ENCODE measurements at regions of chr11 and their contacts with region 1.

Region 1: DNA sequence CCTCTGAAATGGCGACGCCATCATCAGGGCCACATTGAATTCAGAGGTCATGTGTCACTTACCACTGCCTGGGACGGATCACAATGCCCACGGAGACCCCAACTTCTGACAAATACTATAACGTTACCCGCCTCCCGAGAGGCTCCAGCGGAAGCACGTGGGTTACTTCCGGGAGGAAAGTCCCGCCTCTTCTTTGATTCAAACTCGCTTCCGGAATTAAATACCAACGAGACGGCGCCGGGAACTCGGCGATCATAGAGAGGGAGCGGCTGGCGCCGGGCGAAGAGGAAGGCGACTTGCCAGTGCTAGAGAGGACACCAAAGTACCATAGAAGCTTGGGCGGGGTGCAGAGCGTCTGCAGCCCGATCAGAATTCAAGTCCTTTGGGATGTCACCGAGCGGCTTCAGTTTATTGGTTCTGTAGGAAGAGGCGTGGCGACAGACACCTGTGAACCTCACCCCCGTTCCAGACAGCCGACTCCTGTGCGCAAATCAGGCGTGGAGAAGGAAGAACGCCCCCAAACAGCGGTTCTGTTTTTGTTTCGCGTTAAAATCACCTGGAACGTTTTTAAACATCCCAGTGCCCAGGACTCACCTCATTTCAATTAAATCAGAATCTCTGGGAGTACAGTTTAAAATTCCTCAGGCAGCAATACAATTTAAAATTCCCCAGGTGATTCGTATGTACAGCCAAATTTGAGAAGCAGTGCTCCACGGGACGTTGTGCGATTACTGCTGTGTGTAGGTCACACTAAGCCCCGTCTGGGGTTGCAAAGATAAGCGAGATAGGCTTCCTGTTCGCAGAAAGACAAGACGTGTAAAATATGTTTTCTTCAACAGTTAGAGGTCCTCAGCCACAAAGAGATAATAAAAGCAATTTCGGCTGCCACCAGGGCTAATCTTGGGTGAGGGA is at the start of gene TIMM10:
- DNase-seq: peak; percentile 97 to 99
- H3K4me3 ChIP-seq: peak within 1 kb of the TSS; percentile 78
- H3K4me3 Mint-ChIP-seq: peak within 1 kb of the TSS; percentile 92
- H3K27ac Mint-ChIP-seq: peak within 1 kb of the TSS; percentile 89
- H3K4me1 ChIP-seq: peaks cover 14% of the 10 kb centered on the region
- H3K4me1 Mint-ChIP-seq: peaks cover 22% of the 10 kb centered on the region
- H3K27me3 ChIP-seq: no peaks in the 10 kb centered on the region
- H3K27me3 Mint-ChIP-seq: no peaks in the 10 kb centered on the region
- CTCF ChIP-seq: no peak
- total RNA-seq, gene TIMM10: 102 and 103 TPM in 2 replicates

Region 2: GRCh38 chr11:57456960-57457642 is 73.8 kb before region 1 on chr11:
- CTCF ChIA-PET with region 1: interaction called, 18 read pairs
- POLR2A ChIA-PET with region 1: interaction called, 3 read pairs
- intact Hi-C with region 1: loop called (anchors 1 kb)
- DNase-seq: peak; percentile 88 to 92
- H3K4me3 ChIP-seq: no peak overlapping the region
- H3K4me3 Mint-ChIP-seq: peak overlapping the region; percentile 85
- H3K27ac Mint-ChIP-seq: no peak overlapping the region
- H3K4me1 ChIP-seq: peaks cover 28% of the 10 kb centered on the region
- H3K4me1 Mint-ChIP-seq: peaks cover 20% of the 10 kb centered on the region
- H3K27me3 ChIP-seq: peaks cover 3% of the 10 kb centered on the region; the same call in 1 of the 2 replicates
- H3K27me3 Mint-ChIP-seq: peaks cover 15% of the 10 kb centered on the region
- CTCF ChIP-seq: peak; percentile 98 to 99

Region 3: DNA sequence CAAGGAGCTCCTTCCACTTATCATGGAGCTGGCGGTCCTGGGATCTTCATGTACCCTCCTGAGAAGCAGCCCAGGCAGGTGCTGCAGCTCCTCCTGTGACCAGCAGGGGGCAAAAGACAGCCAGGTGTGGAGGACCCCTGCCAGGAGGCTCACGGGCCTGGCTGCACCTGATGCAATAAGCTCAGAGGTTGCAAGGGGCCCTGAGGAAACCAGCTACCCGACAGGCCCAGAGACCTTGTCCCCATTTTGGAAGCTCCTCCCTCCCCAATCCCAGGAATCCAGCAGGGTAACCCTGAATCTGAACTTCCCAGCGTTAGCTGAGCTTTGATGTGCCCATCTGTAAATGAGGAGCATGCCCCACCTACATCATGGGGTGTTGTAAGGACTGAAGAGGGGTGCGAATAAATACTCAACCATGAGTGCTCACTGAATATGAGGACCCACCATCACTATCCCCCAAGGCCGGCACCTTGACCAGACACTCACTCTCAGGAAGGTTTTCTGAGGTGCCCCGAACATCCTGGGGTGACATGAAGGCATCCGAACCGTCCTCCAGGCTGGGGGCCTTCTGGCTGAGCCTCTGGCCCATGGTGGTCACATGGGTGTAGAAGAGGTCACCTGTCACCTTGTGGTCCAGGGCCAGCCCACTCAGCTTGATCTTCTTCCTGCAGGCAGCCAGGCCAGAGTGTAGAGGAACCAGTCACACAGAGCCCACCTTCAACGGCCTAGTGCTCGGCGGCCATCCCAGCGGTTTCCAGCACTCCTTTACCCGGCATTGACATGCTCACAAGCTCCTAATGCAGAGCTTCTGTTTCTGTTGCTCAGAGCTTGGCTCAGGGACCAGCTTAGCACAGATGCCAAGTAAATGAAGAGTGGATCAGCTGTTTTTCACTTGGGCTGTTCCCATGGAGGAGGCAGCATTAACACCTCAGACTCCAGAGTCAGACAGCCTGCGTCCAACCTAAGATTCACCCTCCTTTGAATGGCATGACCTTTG is 37.0 kb before region 1 on chr11:
- CTCF ChIA-PET with region 1: interaction called, 132 read pairs
- POLR2A ChIA-PET with region 1: interaction called, 13 read pairs
- intact Hi-C with region 1: loop called (anchors 1 kb)
- DNase-seq: peak; percentile 95 to 96
- H3K4me3 ChIP-seq: no peak overlapping the region
- H3K4me3 Mint-ChIP-seq: peak overlapping the region; percentile 25
- H3K27ac Mint-ChIP-seq: peak overlapping the region; percentile 96
- H3K4me1 ChIP-seq: peaks cover 40% of the 10 kb centered on the region
- H3K4me1 Mint-ChIP-seq: peaks cover 28% of the 10 kb centered on the region
- H3K27me3 ChIP-seq: no peaks in the 10 kb centered on the region
- H3K27me3 Mint-ChIP-seq: no peaks in the 10 kb centered on the region
- CTCF ChIP-seq: peak; percentile 95 to 97

Region 4: GRCh38 chr11:57552479-57552878 is 21.6 kb after region 1 on chr11:
- CTCF ChIA-PET with region 1: interaction called, 8 read pairs
- POLR2A ChIA-PET with region 1: interaction called, 4 read pairs
- intact Hi-C with region 1: loop called (anchors 1 kb)
- DNase-seq: peak; percentile 89 to 93
- H3K4me3 ChIP-seq: no peak overlapping the region; the same call in 1 of the 2 replicates
- H3K4me3 Mint-ChIP-seq: peak overlapping the region; percentile 75
- H3K27ac Mint-ChIP-seq: peak overlapping the region; percentile 99
- H3K4me1 ChIP-seq: peaks cover 44% of the 10 kb centered on the region
- H3K4me1 Mint-ChIP-seq: peaks cover 18% of the 10 kb centered on the region
- H3K27me3 ChIP-seq: no peaks in the 10 kb centered on the region
- H3K27me3 Mint-ChIP-seq: no peaks in the 10 kb centered on the region
- CTCF ChIP-seq: peak in 1 of 2 experiments; percentile 8

Region 5: DNA sequence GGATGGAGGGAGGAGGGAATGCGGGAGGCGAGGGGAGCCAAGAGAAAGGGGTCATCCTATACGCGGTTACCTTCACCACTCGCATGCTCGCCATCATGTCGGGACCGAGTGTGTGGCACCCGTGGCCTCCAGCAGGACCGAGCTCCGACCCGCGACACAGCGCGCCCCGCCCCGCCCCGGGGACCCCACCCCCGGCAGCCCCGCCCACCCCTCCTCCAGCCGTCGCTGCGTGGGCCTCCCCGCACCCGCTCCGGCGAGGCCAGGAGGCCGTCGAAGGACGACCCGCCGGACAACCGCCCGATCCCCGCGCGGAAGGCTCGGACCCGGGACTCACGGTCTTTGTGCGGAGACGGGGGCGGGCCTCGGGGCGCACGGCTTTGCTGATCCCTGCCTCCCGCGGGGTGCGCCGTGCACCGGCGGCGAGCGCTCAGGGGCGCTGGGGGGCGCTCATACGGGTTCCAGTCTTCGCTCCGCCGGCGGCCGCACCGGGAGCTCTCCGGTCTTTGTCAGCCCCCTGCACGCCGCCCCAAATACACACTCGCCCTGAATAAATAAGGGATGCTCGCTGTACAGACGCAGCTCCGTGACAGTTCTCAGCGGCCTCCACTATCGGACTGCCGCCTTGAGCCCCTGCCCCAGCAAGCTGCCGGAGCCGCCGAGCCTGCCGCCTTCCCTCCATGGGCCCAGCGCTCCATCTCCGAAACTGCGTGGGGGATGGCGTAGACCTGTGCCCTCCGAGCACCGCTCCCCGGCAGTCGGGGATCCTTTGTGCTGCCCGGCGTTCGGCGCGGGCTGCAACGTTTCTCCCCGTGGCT is 36.9 kb after region 1 on chr11 and contains the start of gene UBE2L6:
- CTCF ChIA-PET with region 1: interaction called, 5 read pairs
- POLR2A ChIA-PET with region 1: no interaction called
- intact Hi-C with region 1: loop called (anchors 1 kb)
- DNase-seq: peak; percentile 55 to 67
- H3K4me3 ChIP-seq: peak within 1 kb of the TSS; percentile 54
- H3K4me3 Mint-ChIP-seq: peak within 1 kb of the TSS; percentile 96
- H3K27ac Mint-ChIP-seq: peak within 1 kb of the TSS; percentile 40
- H3K4me1 ChIP-seq: peaks cover 10% of the 10 kb centered on the region; the same call in 1 of the 2 replicates
- H3K4me1 Mint-ChIP-seq: peaks cover 14% of the 10 kb centered on the region
- H3K27me3 ChIP-seq: no peaks in the 10 kb centered on the region
- H3K27me3 Mint-ChIP-seq: no peaks in the 10 kb centered on the region
- CTCF ChIP-seq: peak in 1 of 2 experiments; percentile 49
- total RNA-seq, gene UBE2L6: 16.7 and 20.2 TPM in 2 replicates

Region 6: GRCh38 chr11:57712256-57713150 is 181.7 kb after region 1 on chr11 and contains the start of gene TMX2:
- CTCF ChIA-PET with region 1: no interaction called
- POLR2A ChIA-PET with region 1: no interaction called
- intact Hi-C with region 1: loop called (anchors 1 kb)
- DNase-seq: peak; percentile 95 to 98
- H3K4me3 ChIP-seq: peak within 1 kb of the TSS; percentile 91
- H3K4me3 Mint-ChIP-seq: peak within 1 kb of the TSS; percentile 97
- H3K27ac Mint-ChIP-seq: peak within 1 kb of the TSS; percentile 99
- H3K4me1 ChIP-seq: peaks cover 6% of the 10 kb centered on the region; the same call in 1 of the 2 replicates
- H3K4me1 Mint-ChIP-seq: peaks cover 18% of the 10 kb centered on the region
- H3K27me3 ChIP-seq: no peaks in the 10 kb centered on the region
- H3K27me3 Mint-ChIP-seq: no peaks in the 10 kb centered on the region
- CTCF ChIP-seq: no peak
- total RNA-seq, gene TMX2: 150 and 152 TPM in 2 replicates